ENCODE measurements at regions of chr19 and their contacts with region 1.

Region 1: GRCh38 chr19:48713864-48714758 is 5.4 kb downstream of the MAMSTR start:
- DNase-seq: peak; percentile 94
- ATAC-seq: peak; percentile 91
- H3K4me3 Mint-ChIP-seq: peak overlapping the region; percentile 81
- H3K27ac Mint-ChIP-seq: peak overlapping the region; percentile 77
- H3K4me1 Mint-ChIP-seq: peaks cover 25% of the 10 kb centered on the region
- H3K27me3 Mint-ChIP-seq: no peaks in the 10 kb centered on the region
- CTCF ChIP-seq: no peak

Region 2: DNA sequence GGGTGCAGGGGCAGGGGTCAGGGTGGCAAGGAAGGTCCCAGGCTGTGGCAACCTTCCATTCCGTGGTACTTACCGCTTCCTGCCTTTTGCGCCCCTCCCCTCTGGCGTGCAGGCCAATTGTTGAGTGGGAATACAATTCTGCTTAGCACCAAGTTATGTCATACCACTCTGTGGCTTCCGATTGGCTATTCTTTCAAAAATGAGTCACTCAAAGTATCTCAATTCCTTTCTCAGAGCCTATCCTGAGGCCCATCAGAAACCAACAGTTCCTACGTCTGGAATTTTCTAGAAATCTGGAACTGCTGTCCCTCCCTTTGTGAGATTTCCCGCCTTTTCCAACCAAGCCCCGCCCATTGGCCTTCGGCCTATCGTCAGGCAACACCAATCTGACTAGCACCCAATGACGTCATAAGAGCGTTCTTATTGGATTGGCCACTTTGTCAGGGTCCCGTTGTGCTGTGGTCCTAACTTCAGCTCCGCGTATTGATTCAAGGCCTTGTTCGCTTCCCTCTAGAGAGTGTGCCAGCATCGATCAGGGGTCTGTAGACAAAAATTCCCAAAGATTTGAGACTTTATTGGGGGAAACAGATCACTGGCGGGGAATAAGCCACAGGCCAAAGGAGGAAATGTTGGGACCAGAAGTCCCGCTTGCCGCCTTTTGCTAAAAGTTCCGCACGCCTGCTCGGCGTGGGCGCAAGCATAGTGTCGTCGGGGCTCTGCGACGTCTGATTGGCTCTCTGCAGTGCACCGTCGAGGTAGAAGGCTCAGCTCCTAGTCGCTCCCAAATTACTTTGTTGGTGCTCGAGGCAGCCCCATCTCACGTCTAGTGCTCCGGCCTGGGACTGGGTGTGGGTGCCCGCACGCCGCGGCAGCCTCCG is 53.0 kb before region 1 on chr19:
- CTCF ChIA-PET with region 1: no interaction called
- POLR2A ChIA-PET with region 1: no interaction called
- intact Hi-C with region 1: loop called (anchors 2 kb)
- DNase-seq: peak; percentile 63
- ATAC-seq: peak; percentile 94
- H3K4me3 Mint-ChIP-seq: peak overlapping the region; percentile 82
- H3K27ac Mint-ChIP-seq: peak overlapping the region; percentile 95
- H3K4me1 Mint-ChIP-seq: peaks cover 16% of the 10 kb centered on the region
- H3K27me3 Mint-ChIP-seq: no peaks in the 10 kb centered on the region
- CTCF ChIP-seq: no peak

Region 3: DNA sequence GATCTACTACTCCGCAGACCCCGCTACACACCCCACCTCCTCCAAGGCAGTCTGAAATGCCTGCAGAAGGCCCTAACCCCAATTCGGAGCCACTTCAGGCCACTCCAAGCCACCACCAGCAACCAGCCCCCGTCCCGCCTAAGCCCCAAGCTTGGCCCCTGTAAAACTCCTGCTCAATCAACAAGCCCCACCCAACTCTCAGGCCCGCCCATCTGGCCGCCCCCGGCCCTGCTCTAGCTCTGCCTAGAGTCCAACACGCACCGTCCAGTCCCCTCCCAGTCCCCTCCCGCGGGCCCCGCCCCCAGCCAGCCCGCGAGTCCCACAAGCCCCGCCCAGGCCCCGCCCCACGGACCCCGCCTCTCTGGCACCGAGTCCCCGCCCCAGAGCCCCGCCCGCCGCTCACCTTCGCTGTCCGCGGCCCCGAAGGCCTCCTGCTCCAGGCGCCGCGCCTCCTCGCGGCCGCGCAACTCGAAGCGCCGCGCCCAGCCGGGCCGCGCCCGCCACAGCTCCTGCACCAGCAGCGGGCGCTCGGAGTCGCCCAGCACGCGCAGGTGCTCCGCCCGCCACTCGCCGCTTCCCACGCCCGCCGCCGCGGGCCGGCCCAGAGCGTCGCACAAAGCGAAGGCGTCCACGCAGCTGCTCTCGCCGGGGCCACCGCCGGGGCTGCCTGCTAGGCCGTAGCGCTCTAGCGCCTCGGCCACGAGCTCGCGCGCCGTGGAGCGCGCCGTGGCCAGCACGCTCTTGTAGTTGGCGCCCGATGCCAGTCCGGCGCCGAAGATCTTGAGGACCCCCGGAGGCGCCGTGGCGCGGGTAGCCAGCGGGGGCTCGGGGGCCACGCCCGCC is 24.7 kb after region 1 on chr19:
- CTCF ChIA-PET with region 1: no interaction called
- POLR2A ChIA-PET with region 1: interaction called, 4 read pairs
- intact Hi-C with region 1: loop called (anchors 1 kb)
- DNase-seq: peak; percentile 86
- ATAC-seq: peak; percentile 94
- H3K4me3 Mint-ChIP-seq: peak overlapping the region; percentile 66
- H3K27ac Mint-ChIP-seq: peak overlapping the region; percentile 70
- H3K4me1 Mint-ChIP-seq: peaks cover 20% of the 10 kb centered on the region
- H3K27me3 Mint-ChIP-seq: peaks cover 8% of the 10 kb centered on the region
- CTCF ChIP-seq: no peak

Measured in activated B cell treated with CpG ODN at 0.5 μM for 24 hours (primary cell).